ENCODE measurements at regions of chr22 and their contacts with region 1.

Region 1: DNA sequence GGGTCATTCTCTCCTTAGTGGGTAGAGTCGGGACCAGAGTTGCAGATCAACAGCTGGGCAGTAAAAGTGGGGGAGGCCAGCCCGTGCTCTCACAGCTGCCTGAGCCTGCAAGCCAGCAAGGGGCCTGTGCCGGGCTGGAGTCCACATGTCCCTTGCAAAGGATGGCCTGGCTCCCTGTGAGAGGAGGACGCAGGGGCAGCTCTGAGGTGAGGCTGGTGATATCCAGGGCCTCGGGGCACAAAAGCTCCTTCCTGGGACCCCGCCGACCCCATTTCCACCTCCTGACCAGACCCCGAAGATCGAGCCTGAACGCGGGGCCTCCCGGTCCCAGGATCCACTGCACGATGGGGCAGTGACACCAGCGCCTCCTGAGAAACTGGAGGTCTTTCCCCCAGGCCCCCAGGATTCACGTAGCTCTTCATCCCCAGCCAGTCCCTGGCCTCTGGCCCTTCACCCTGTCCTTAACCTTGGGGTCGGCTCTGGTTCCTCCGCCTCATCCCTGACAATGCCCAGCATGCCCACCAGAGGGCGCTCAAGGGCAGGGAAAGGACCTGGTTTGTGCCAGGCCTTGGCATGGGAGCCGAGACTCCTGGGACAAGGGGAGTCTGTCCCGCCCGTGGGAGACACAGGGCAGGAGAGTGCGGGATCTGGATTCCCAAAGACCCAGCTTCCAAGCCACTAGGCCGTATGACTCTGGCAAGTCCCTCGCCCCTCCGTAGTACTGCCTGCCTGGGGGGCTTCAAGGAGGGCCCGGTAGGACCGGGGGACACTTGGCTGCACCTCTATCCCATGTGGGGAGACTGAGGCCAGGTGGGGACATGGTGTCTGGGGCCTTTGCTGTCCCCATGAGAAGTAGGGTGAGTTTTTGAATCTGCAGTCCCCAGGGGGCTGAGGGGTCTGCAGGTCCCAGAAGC is 17.8 kb upstream of the WNT7B start:
- DNase-seq: peak; percentile 52 to 80 (median 71)
- H3K4me3 ChIP-seq: no peak overlapping the region
- H3K4me3 Mint-ChIP-seq: peak overlapping the region in 1 of 7 donors; percentile 51
- H3K27ac ChIP-seq: no peak overlapping the region
- H3K27ac Mint-ChIP-seq: peak overlapping the region in 6 of 8 donors; percentile 24 to 81 (median 69)
- H3K4me1 ChIP-seq: no peaks in the 10 kb centered on the region
- H3K4me1 Mint-ChIP-seq: peaks cover 6 to 11% (median 9%) of the 10 kb centered on the region in 3 donors
- H3K27me3 ChIP-seq: no peaks in the 10 kb centered on the region
- H3K27me3 Mint-ChIP-seq: peaks cover 5 to 6% of the 10 kb centered on the region in 2 donors

Region 2: DNA sequence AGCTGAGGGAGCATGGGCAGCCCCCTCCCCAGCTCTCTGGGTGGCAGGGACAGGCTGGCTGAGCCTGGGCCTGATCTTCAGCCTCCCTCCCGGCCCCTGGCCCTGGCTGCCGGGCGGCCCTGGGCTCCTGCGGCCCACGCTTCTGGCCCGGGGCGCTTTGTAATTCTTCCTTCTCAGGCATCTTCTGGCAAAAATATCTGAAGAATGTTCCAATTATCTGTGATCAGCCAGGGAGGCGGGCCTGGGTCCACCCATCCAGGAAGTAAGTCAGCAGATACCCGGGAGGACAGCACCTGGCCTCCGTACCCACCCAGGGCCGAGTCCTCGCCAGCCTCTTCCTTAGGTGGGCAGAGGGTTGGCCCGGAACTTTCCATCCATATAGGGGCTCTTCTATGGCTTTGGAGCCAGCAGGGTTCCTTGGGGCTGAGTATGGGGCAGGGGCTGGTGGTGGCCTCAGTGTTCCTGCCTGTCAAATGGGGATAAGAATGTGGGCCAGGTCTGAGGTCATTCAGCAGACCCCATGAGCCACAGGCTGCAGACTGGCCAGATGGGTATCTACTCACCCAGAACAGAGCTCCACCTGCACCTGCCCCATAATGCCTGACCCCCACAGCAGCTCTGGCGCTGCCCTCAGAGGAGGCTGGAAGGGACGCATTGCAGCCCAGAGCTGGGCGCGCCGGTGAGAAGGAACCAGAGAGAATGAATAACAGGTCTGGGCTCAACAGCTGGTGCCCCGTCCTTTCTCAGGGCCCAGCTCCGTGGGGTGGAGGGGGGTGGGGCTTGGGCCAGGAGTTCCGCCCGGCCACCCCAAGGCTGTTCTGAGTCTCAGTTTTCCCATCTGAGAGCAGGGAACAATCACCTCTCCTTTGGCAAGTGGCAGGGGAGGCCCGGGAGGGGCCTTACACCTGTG is 34.0 kb before region 1 on chr22:
- CTCF ChIA-PET with region 1: no interaction called
- POLR2A ChIA-PET with region 1: no interaction called
- DNase-seq: no peak
- H3K4me3 ChIP-seq: no peak overlapping the region
- H3K4me3 Mint-ChIP-seq: no peak overlapping the region
- H3K27ac ChIP-seq: no peak overlapping the region
- H3K27ac Mint-ChIP-seq: no peak overlapping the region
- H3K4me1 ChIP-seq: no peaks in the 10 kb centered on the region
- H3K4me1 Mint-ChIP-seq: no peaks in the 10 kb centered on the region
- H3K27me3 ChIP-seq: no peaks in the 10 kb centered on the region
- H3K27me3 Mint-ChIP-seq: peaks cover 3 to 8% of the 10 kb centered on the region in 2 donors

Region 3: GRCh38 chr22:46027192-46028105 is 32.7 kb after region 1 on chr22:
- CTCF ChIA-PET with region 1: no interaction called
- POLR2A ChIA-PET with region 1: no interaction called
- DNase-seq: peak in 1 of 5 donors; percentile 44
- H3K4me3 ChIP-seq: no peak overlapping the region
- H3K4me3 Mint-ChIP-seq: no peak overlapping the region
- H3K27ac ChIP-seq: no peak overlapping the region
- H3K27ac Mint-ChIP-seq: no peak overlapping the region
- H3K4me1 ChIP-seq: no peaks in the 10 kb centered on the region
- H3K4me1 Mint-ChIP-seq: peaks cover 0 to 10% (median 0%) of the 10 kb centered on the region in 3 donors
- H3K27me3 ChIP-seq: peaks cover 37% of the 10 kb centered on the region
- H3K27me3 Mint-ChIP-seq: peaks cover 26 to 50% of the 10 kb centered on the region in 2 donors

Region 4: GRCh38 chr22:46116491-46116958 is 121.8 kb after region 1 on chr22:
- CTCF ChIA-PET with region 1: interaction called, 44 read pairs
- POLR2A ChIA-PET with region 1: no interaction called
- DNase-seq: peak; percentile 68 to 90 (median 79)
- H3K4me3 ChIP-seq: no peak overlapping the region
- H3K4me3 Mint-ChIP-seq: no peak overlapping the region
- H3K27ac ChIP-seq: no peak overlapping the region
- H3K27ac Mint-ChIP-seq: peak overlapping the region in 1 of 8 donors; percentile 14
- H3K4me1 ChIP-seq: no peaks in the 10 kb centered on the region
- H3K4me1 Mint-ChIP-seq: peaks cover 0 to 5% (median 3%) of the 10 kb centered on the region in 3 donors
- H3K27me3 ChIP-seq: no peaks in the 10 kb centered on the region
- H3K27me3 Mint-ChIP-seq: no peaks in the 10 kb centered on the region